ENCODE measurements at regions of chr18 and their contacts with region 1.

Region 1: DNA sequence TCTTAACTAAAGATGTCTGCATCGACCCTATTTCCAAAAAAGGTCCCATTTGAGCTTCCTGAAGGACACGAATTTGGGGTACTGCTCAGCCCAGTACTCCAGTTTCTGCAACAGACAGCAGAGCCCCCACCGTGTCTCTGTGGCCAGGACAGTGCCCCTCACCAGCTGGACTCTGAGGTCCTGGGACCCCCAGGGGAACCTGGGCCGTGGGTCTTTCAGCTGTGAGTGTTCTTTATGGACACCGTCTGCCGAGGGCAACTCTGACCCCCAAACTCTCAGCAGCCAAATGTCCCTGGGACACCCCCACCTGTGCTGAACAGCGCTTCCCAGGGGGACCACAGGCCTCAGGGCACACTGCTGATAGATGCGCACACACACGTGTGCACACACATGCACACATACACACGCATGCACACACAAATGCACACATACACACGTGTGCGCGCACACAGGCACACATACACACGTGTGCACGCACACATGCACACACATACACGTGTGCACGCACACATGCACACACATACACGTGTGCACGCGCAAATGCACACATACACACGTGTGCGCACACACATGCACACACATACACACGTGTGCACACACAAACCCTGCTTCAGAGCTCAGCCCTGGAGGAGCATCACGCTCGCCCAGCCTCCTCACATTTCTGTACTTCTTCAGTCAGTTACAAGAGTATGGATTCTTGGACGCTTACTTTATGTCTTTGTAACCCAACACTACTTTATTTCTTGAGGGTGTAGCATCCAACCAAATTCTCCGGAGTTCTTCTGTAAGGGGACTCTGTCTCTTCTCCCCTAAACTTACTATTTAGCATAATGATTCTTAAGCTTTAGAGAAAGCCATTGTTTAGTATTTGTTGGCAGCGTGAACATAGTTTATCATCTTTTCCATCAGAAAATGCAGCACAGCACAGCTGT is 74.7 kb upstream of the CTDP1 start:
- DNase-seq: no peak
- H3K4me3 ChIP-seq: no peak overlapping the region
- H3K27ac ChIP-seq: no peak overlapping the region
- H3K4me1 ChIP-seq: no peaks in the 10 kb centered on the region
- H3K27me3 ChIP-seq: no peaks in the 10 kb centered on the region
- CTCF ChIP-seq: no peak

Region 2: DNA sequence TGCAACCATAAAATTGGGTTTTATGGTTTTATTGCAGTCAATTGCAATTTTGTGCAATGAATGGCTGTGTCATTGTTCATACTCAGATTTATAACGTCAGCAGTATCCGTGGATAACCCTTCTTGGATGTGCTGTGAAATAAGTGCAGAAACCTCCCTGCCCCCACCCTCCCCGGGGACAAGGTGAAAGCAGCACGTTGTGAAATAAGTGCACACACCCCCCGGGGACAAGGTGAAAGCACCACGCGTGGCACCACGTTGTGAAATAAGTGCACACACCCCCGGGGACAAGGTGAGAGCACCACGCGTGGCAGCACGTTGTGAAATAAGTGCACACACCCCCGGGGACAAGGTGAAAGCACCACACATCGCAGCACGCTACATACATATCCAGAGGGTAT is 302.7 kb before region 1 on chr18:
- CTCF ChIA-PET with region 1: no interaction called
- dilution Hi-C with region 1: no loop called
- in situ Hi-C with region 1: no loop called
- intact Hi-C with region 1: no loop called
- DNase-seq: no peak
- H3K4me3 ChIP-seq: no peak overlapping the region
- H3K27ac ChIP-seq: no peak overlapping the region
- H3K4me1 ChIP-seq: no peaks in the 10 kb centered on the region
- H3K27me3 ChIP-seq: no peaks in the 10 kb centered on the region
- CTCF ChIP-seq: no peak

Region 3: DNA sequence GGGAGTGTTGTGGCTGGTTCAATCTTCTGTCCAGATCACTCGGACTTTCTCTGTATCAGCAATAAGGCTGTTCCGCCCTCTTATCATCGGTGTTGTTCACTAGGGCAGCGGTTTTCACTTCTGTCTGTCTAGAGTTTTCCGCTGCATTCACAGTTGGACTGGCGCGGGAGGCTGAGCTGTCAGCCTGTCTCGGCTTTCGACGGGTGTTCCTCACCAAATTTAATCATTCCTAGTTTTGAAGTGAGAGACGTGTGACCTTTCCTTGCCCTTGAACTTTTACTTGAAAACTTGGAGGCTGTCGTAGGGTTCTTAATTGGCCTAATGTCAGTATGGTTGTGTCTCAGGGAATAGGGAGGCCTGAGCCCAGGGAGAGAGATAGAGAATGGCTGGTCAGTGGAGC is 100.8 kb before region 1 on chr18:
- CTCF ChIA-PET with region 1: no interaction called
- dilution Hi-C with region 1: loop called (anchors 5 kb)
- in situ Hi-C with region 1: no loop called
- intact Hi-C with region 1: no loop called
- DNase-seq: no peak
- H3K4me3 ChIP-seq: no peak overlapping the region
- H3K27ac ChIP-seq: no peak overlapping the region
- H3K4me1 ChIP-seq: no peaks in the 10 kb centered on the region
- H3K27me3 ChIP-seq: no peaks in the 10 kb centered on the region
- CTCF ChIP-seq: no peak

Region 4: GRCh38 chr18:79538635-79539034 is 66.2 kb before region 1 on chr18:
- CTCF ChIA-PET with region 1: no interaction called
- dilution Hi-C with region 1: loop called (anchors 5 kb)
- in situ Hi-C with region 1: no loop called
- intact Hi-C with region 1: no loop called
- DNase-seq: no peak
- H3K4me3 ChIP-seq: no peak overlapping the region
- H3K27ac ChIP-seq: no peak overlapping the region
- H3K4me1 ChIP-seq: no peaks in the 10 kb centered on the region
- H3K27me3 ChIP-seq: no peaks in the 10 kb centered on the region
- CTCF ChIP-seq: no peak

Region 5: GRCh38 chr18:79657342-79657985 is 52.6 kb after region 1 on chr18:
- CTCF ChIA-PET with region 1: no interaction called
- dilution Hi-C with region 1: loop called (anchors 5 kb)
- in situ Hi-C with region 1: no loop called
- intact Hi-C with region 1: no loop called
- DNase-seq: peak; percentile 19
- H3K4me3 ChIP-seq: no peak overlapping the region
- H3K27ac ChIP-seq: no peak overlapping the region
- H3K4me1 ChIP-seq: no peaks in the 10 kb centered on the region
- H3K27me3 ChIP-seq: peaks cover 3% of the 10 kb centered on the region
- CTCF ChIP-seq: no peak

Region 6: GRCh38 chr18:80002468-80002867 is 397.6 kb after region 1 on chr18:
- CTCF ChIA-PET with region 1: no interaction called
- dilution Hi-C with region 1: no loop called
- in situ Hi-C with region 1: no loop called
- intact Hi-C with region 1: no loop called
- DNase-seq: no peak
- H3K4me3 ChIP-seq: no peak overlapping the region
- H3K27ac ChIP-seq: no peak overlapping the region
- H3K4me1 ChIP-seq: no peaks in the 10 kb centered on the region
- H3K27me3 ChIP-seq: no peaks in the 10 kb centered on the region
- CTCF ChIP-seq: no peak